IMR-90 (cell line): ENCODE measurements at regions of chr3 and their contacts with region 1.

Region 1: GRCh38 chr3:102307429-102307828 is 127.4 kb upstream of the ZPLD1 start:
- DNase-seq: no peak
- ATAC-seq: no peak
- H3K4me3 ChIP-seq: no peak overlapping the region
- H3K27ac ChIP-seq: no peak overlapping the region
- H3K4me1 ChIP-seq: no peaks in the 10 kb centered on the region
- H3K27me3 ChIP-seq: no peaks in the 10 kb centered on the region; the same call in 1 of the 2 replicates
- CTCF ChIP-seq: no peak
- POLR2A ChIP-seq: no peak
- RAD21 ChIP-seq: no peak

Region 2: DNA sequence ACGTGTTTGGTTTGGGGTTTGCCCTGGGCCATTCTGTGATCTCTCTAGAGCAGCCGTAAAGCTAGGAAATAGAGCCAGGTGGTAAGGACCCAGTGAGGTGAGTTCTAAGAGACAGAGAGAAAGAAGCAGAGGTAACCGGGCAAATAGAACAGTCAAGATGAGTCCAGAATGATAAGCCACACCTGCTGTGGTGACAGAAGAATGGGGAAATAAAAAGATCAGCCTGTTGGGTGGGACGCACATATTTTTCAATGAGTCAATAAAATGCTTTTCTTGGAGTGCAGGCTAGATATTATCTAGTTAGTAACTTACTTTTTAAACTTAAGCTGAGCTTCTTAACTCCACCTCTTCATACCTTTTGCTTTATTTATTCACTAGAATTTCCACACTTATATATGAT is 323.1 kb before region 1 on chr3:
- CTCF ChIA-PET with region 1: no interaction called
- POLR2A ChIA-PET with region 1: no interaction called
- dilution Hi-C with region 1: no loop called
- in situ Hi-C with region 1: no loop called
- intact Hi-C with region 1: loop called (anchors 5 kb)
- DNase-seq: no peak
- ATAC-seq: no peak
- H3K4me3 ChIP-seq: no peak overlapping the region
- H3K27ac ChIP-seq: no peak overlapping the region
- H3K4me1 ChIP-seq: no peaks in the 10 kb centered on the region
- H3K27me3 ChIP-seq: no peaks in the 10 kb centered on the region
- CTCF ChIP-seq: no peak
- POLR2A ChIP-seq: no peak
- RAD21 ChIP-seq: no peak

Region 3: DNA sequence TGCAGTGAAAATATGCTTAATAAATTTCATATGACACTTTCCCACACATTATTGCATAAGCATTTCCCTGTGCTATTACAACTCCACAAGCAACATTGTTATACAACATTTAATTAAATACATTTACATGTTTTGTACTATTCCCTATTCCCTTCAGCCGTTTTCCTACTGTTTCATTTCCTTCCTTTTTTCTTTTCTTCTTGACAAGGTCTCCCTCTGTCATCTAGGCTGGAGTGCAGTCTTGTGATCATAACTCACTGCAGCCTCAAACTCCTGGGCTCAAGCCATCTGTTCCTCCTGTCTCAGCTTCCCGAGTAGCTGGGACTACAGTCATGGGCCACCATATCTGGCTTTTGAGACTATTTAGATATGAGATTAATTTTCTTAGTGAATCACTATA is 203.4 kb before region 1 on chr3:
- CTCF ChIA-PET with region 1: no interaction called
- POLR2A ChIA-PET with region 1: no interaction called
- dilution Hi-C with region 1: no loop called
- in situ Hi-C with region 1: no loop called
- intact Hi-C with region 1: no loop called
- DNase-seq: no peak
- ATAC-seq: no peak
- H3K4me3 ChIP-seq: no peak overlapping the region
- H3K27ac ChIP-seq: no peak overlapping the region
- H3K4me1 ChIP-seq: no peaks in the 10 kb centered on the region
- H3K27me3 ChIP-seq: no peaks in the 10 kb centered on the region
- CTCF ChIP-seq: no peak
- POLR2A ChIP-seq: no peak
- RAD21 ChIP-seq: no peak

Region 4: GRCh38 chr3:102481050-102481449 is 173.6 kb after region 1 on chr3:
- CTCF ChIA-PET with region 1: no interaction called
- POLR2A ChIA-PET with region 1: no interaction called
- dilution Hi-C with region 1: no loop called
- in situ Hi-C with region 1: no loop called
- intact Hi-C with region 1: no loop called
- DNase-seq: no peak
- ATAC-seq: no peak
- H3K4me3 ChIP-seq: no peak overlapping the region
- H3K27ac ChIP-seq: no peak overlapping the region
- H3K4me1 ChIP-seq: no peaks in the 10 kb centered on the region
- H3K27me3 ChIP-seq: no peaks in the 10 kb centered on the region
- CTCF ChIP-seq: no peak
- POLR2A ChIP-seq: no peak
- RAD21 ChIP-seq: no peak